ENCODE measurements at regions of chr1 and their contacts with region 1.

Region 1: GRCh38 chr1:156689035-156689952 is 12.1 kb upstream of the NES start:
- DNase-seq: no peak
- H3K4me3 ChIP-seq: peak overlapping the region in 3 of 4 donors; percentile 2 to 37 (median 22)
- H3K27ac ChIP-seq: no peak overlapping the region
- H3K4me1 ChIP-seq: peaks cover 7 to 28% (median 19%) of the 10 kb centered on the region in 4 donors
- H3K27me3 ChIP-seq: peaks cover 0 to 80% (median 4%) of the 10 kb centered on the region in 4 donors
- CTCF ChIP-seq: peak; percentile 92 to 93 (median 93)
- EP300 ChIP-seq: no peak
- POLR2A ChIP-seq: no peak

Region 2: DNA sequence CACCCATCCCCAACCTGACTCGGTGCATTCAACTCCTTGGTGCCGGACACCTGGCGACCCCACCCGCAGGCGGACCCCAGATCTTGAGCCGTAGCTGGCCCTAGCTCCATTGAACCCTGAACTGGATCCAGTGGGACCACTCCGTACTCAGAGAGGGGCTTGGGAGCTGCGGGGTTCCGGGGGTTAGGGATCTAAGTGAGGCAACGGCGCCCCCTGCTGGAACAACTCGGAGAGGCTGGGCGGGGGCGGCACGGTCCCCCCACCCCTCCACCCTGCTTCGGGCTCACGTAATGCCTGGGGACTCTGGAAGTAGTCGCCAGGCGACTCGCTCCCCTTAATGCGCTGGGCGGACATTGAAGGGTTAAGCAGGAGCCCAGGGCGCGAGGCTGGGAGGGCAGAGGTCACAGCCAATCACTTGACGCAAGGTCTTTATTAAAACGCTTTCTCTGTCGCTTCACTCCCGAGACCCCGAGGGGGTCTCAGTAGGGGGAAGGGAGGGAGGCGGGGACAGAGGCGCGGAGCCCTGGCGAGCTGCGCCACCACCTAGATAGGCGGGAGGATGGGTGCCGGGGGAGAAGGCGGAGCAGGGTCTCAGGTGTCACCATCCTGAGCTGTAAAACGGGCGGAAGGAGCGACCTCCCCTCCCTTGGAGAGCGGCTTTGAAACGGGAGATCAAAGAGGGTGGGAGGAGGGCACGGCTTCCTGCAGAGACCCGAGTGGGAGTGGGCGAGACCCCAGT is 16.8 kb after region 1 on chr1:
- intact Hi-C with region 1: loop called (anchors 2 kb)
- DNase-seq: peak; percentile 94
- H3K4me3 ChIP-seq: peak overlapping the region; percentile 56 to 60 (median 57)
- H3K27ac ChIP-seq: peak overlapping the region; percentile 76 to 88 (median 88)
- H3K4me1 ChIP-seq: peaks cover 39 to 78% (median 72%) of the 10 kb centered on the region in 4 donors
- H3K27me3 ChIP-seq: peaks cover 0 to 27% (median 0%) of the 10 kb centered on the region in 4 donors
- CTCF ChIP-seq: peak; percentile 73 to 85 (median 74)
- EP300 ChIP-seq: no peak
- POLR2A ChIP-seq: no peak

Region 3: DNA sequence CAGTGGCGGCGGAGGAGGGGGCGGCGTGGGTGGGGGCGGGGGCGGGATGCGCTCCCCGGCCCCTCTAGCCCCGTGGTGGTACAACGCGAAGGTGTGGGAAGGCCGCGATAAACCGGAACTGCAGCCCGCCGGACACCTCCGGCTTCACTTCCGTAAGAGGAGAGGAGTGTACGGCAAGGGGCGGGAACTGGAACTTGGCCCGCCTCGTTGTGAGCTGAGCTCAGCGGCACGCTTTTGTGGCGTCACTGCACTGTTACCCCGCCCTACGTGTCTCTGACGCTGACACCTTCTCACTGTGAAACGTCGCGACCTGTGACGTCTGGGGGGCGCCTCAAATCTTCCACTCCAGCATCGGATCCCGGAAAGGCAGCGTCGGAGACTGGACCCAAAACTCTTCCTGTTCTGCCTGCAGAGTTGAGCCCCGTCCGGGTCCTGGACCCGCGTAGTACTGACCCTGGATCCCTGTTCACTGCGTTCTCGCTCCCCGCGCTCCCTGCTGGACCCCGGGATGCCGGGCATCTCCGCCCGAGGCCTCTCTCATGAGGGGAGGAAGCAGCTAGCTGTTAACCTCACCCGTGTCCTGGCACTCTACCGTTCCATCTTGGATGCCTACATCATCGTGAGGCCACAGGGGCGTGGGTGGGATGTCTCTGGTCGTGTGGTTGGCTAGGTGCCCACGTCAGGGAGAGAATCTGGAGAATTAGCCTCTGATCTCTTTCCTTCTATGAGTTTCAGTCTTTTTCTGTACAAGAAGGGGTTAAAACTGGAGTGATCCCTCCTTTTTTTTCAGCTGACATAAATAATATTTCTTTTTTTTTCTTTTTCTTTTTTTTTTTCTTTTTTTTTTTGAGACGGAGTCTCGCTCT is 39.5 kb after region 1 on chr1 and contains the start of gene ISG20L2:
- intact Hi-C with region 1: loop called (anchors 1 kb)
- DNase-seq: peak; percentile 98
- H3K4me3 ChIP-seq: peak within 1 kb of the TSS; percentile 70 to 79 (median 74)
- H3K27ac ChIP-seq: peak within 1 kb of the TSS; percentile 93 to 98 (median 94)
- H3K4me1 ChIP-seq: peaks cover 41 to 61% (median 59%) of the 10 kb centered on the region in 4 donors
- H3K27me3 ChIP-seq: no peaks in the 10 kb centered on the region
- CTCF ChIP-seq: no peak
- EP300 ChIP-seq: no peak
- POLR2A ChIP-seq: peak; percentile 34
- total RNA-seq, gene ISG20L2: 16.2 to 20.0 (median 19.0) TPM

Region 4: GRCh38 chr1:156889802-156890585 is 200.7 kb after region 1 on chr1:
- intact Hi-C with region 1: loop called (anchors 10 kb)
- DNase-seq: peak; percentile 96
- H3K4me3 ChIP-seq: no peak overlapping the region
- H3K27ac ChIP-seq: no peak overlapping the region
- H3K4me1 ChIP-seq: peaks cover 12 to 31% (median 28%) of the 10 kb centered on the region in 4 donors
- H3K27me3 ChIP-seq: peaks cover 0 to 65% (median 19%) of the 10 kb centered on the region in 4 donors
- CTCF ChIP-seq: peak; percentile 74 to 79 (median 77)
- EP300 ChIP-seq: no peak
- POLR2A ChIP-seq: no peak